BJ (cell line): ENCODE measurements at regions of chr5 and their contacts with region 1.

Region 1: GRCh38 chr5:109876030-109876725 is 186.5 kb downstream of the MAN2A1 start:
- DNase-seq: no peak
- H3K4me3 ChIP-seq: no peak overlapping the region
- H3K27me3 ChIP-seq: no peaks in the 10 kb centered on the region
- CTCF ChIP-seq: no peak

Region 2: GRCh38 chr5:109125755-109126429 is 750.3 kb before region 1 on chr5:
- CTCF ChIA-PET with region 1: no interaction called
- POLR2A ChIA-PET with region 1: no interaction called
- DNase-seq: no peak
- H3K4me3 ChIP-seq: no peak overlapping the region
- H3K27me3 ChIP-seq: no peaks in the 10 kb centered on the region
- CTCF ChIP-seq: no peak

Region 3: DNA sequence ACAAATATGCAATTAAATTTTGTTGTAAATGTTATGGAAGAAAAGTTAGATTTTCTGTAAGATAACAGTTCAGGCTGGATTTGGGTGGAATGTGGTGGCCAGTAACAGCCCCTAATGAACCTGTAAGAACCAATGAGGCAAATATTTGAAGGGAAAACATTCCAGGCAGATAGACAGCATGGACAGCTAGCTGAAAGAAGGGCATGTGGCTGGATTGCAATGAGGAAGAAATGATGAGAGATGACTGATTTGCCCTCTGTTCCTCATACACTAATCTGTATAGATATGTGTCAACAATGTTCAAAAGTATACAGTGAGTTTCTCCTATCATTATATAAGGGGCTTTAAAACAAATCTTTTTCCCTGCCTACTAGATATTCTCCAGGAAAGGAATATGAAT is 127.6 kb before region 1 on chr5:
- CTCF ChIA-PET with region 1: no interaction called
- POLR2A ChIA-PET with region 1: no interaction called
- DNase-seq: no peak
- H3K4me3 ChIP-seq: no peak overlapping the region
- H3K27me3 ChIP-seq: no peaks in the 10 kb centered on the region
- CTCF ChIP-seq: no peak

Region 4: DNA sequence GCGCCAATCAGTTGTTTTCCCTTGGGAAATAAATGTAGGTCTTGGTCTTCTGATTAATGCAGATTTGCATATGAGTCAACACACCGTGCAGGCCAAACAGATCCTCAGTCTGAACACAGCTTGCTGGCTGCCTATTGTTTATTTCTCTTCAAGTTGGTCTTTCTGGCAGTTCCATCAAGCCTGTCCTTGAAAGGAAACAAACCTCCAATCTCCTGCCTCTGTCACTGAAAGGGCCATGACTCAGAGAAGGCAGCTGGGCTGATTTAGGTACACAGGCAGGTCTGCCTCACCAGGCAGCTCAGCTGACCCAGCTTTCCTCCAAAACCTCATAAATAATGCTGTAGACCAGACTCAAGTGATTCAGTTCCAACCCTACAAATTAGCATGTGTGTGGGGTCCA is 10.5 kb before region 1 on chr5:
- CTCF ChIA-PET with region 1: interaction called, 3 read pairs
- POLR2A ChIA-PET with region 1: interaction called, 26 read pairs
- DNase-seq: peak; percentile 52
- H3K4me3 ChIP-seq: no peak overlapping the region
- H3K27me3 ChIP-seq: no peaks in the 10 kb centered on the region
- CTCF ChIP-seq: no peak